Naive thymus-derived CD4-positive, alpha-beta T cell (primary cell): ENCODE measurements at regions of chr6 and their contacts with region 1.

Region 1: GRCh38 chr6:33417903-33418689 is at the start of gene CUTA:
- DNase-seq: peak; percentile 91 to 100 (median 99)
- ATAC-seq: peak; percentile 92
- H3K4me3 ChIP-seq: peak within 1 kb of the TSS; percentile 74
- H3K4me3 Mint-ChIP-seq: peak within 1 kb of the TSS; percentile 88 to 97 (median 94)
- H3K27ac ChIP-seq: peak within 1 kb of the TSS; percentile 94
- H3K27ac Mint-ChIP-seq: peak within 1 kb of the TSS; percentile 98 to 100 (median 99)
- H3K4me1 ChIP-seq: peaks cover 31 to 54% of the 10 kb centered on the region in 2 donors
- H3K4me1 Mint-ChIP-seq: peaks cover 60 to 89% (median 73%) of the 10 kb centered on the region in 7 donors
- H3K27me3 ChIP-seq: no peaks in the 10 kb centered on the region
- H3K27me3 Mint-ChIP-seq: no peaks in the 10 kb centered on the region
- total RNA-seq, gene CUTA: 148 to 235 (median 158) TPM

Region 2: GRCh38 chr6:32853541-32854375 is 564.3 kb before region 1 on chr6 and contains the starts of genes PSMB9 and TAP1:
- CTCF ChIA-PET with region 1: no interaction called
- POLR2A ChIA-PET with region 1: no interaction called
- intact Hi-C with region 1: loop called in 1 of 2 experiments (anchors 10 kb)
- DNase-seq: peak; percentile 92 to 97 (median 94)
- ATAC-seq: peak; percentile 92
- H3K4me3 ChIP-seq: peak within 1 kb of the TSS; percentile 91
- H3K4me3 Mint-ChIP-seq: peak within 1 kb of the TSS; percentile 96 to 100 (median 100)
- H3K27ac ChIP-seq: peak within 1 kb of the TSS; percentile 100
- H3K27ac Mint-ChIP-seq: peak within 1 kb of the TSS; percentile 97 to 100 (median 100)
- H3K4me1 ChIP-seq: peaks cover 45 to 57% of the 10 kb centered on the region in 2 donors
- H3K4me1 Mint-ChIP-seq: peaks cover 61 to 80% (median 72%) of the 10 kb centered on the region in 7 donors
- H3K27me3 ChIP-seq: no peaks in the 10 kb centered on the region
- H3K27me3 Mint-ChIP-seq: no peaks in the 10 kb centered on the region
- total RNA-seq, gene PSMB9: 70.3 to 452 (median 90.5) TPM
- total RNA-seq, gene TAP1: 92.1 to 500 (median 103) TPM

Region 3: DNA sequence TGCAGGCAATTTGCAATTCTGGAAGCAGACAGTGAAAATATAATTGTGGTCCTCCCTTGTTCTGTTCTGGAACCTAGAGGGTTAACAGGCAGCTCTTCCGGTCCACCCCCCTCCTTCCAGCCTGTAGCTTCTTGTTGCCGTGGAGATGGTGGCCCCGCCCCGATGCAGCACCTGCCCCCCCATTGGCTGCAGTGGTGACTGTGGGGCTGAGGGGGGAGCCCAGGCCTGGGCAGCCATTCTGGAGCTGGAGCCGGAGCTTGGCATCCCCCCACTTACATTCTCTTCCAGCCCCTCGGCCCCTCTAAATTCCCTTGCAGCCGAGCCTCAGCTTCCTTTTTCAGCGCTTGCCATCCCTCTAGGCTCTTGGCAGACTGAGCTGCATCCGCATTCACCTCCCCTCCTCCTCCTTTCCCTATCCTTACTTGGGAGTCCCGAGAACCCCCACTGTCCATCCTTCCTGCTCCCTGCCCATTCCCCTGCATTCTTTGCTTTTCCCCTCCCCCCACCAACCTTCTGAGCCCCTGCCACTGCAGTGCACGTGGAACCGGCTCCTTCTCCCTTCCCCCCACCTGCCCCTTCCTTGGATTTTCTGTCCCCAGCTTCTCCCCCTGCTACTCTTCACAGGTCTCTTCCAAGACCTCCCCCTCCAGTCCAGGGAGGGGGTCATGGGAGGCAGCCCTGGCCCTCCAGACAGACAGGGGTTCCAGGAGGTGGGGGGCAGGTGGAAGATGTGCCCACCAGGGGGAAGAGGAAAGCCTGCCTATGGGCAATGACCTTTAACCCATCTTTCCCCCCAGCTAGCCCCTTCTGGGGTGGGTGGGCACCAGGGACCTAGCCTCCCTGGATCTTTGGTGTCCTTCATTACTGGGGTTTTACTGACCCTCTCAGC is 13.1 kb after region 1 on chr6:
- CTCF ChIA-PET with region 1: interaction called, 7 read pairs
- POLR2A ChIA-PET with region 1: interaction called, 61 read pairs
- intact Hi-C with region 1: loop called (anchors 1 kb)
- DNase-seq: peak; percentile 65 to 89 (median 87)
- ATAC-seq: peak; percentile 82
- H3K4me3 ChIP-seq: peak overlapping the region; percentile 52
- H3K4me3 Mint-ChIP-seq: peak overlapping the region; percentile 86 to 98 (median 92)
- H3K27ac ChIP-seq: peak overlapping the region; percentile 88
- H3K27ac Mint-ChIP-seq: peak overlapping the region; percentile 81 to 98 (median 96)
- H3K4me1 ChIP-seq: peaks cover 42 to 51% of the 10 kb centered on the region in 2 donors
- H3K4me1 Mint-ChIP-seq: peaks cover 56 to 69% (median 64%) of the 10 kb centered on the region in 7 donors
- H3K27me3 ChIP-seq: no peaks in the 10 kb centered on the region
- H3K27me3 Mint-ChIP-seq: no peaks in the 10 kb centered on the region

Region 4: DNA sequence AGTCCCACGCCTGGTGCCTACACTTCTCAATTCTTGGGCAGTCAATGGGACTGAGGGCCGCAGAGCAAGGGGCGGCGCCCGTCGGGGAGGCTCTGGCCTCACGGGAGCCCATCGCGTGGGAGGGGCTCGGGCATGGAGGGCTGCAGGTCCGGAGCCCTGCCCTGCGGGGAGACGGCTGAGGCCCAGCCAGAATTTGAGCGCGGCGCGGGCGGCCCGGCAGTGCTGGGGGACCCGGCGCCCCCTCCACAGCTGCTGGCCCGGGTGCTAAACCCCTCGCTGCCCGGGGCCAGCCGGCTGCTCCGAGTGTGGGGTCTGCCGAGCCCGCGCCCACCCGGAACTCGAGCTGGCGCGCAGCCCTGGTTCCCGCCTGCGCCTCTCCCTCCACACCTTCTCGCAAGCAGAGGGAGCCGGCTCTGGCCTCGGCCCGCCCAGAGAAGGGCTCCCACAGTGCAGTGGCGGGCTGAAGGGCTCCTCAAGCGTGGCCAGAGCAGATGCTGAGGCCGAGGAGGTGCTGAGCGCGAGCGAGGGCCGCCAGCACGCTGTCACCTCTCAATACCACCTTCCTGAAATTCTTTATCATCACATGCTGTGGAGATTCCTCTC is 103.5 kb after region 1 on chr6:
- CTCF ChIA-PET with region 1: no interaction called
- POLR2A ChIA-PET with region 1: no interaction called
- intact Hi-C with region 1: no loop called
- DNase-seq: no peak
- ATAC-seq: no peak
- H3K4me3 ChIP-seq: no peak overlapping the region
- H3K4me3 Mint-ChIP-seq: no peak overlapping the region
- H3K27ac ChIP-seq: no peak overlapping the region
- H3K27ac Mint-ChIP-seq: no peak overlapping the region
- H3K4me1 ChIP-seq: no peaks in the 10 kb centered on the region
- H3K4me1 Mint-ChIP-seq: peaks cover 0 to 3% (median 0%) of the 10 kb centered on the region in 7 donors
- H3K27me3 ChIP-seq: no peaks in the 10 kb centered on the region
- H3K27me3 Mint-ChIP-seq: peaks cover 0 to 2% (median 0%) of the 10 kb centered on the region in 5 donors

Region 5: GRCh38 chr6:34760108-34760507 is 1342.0 kb after region 1 on chr6:
- CTCF ChIA-PET with region 1: no interaction called
- POLR2A ChIA-PET with region 1: no interaction called
- intact Hi-C with region 1: no loop called
- DNase-seq: no peak
- ATAC-seq: no peak
- H3K4me3 ChIP-seq: no peak overlapping the region
- H3K4me3 Mint-ChIP-seq: peak overlapping the region in 1 of 10 donors; percentile 36
- H3K27ac ChIP-seq: no peak overlapping the region
- H3K27ac Mint-ChIP-seq: peak overlapping the region in 1 of 9 donors; percentile 21
- H3K4me1 ChIP-seq: peaks cover 7 to 12% of the 10 kb centered on the region in 2 donors
- H3K4me1 Mint-ChIP-seq: peaks cover 3 to 27% (median 14%) of the 10 kb centered on the region in 7 donors
- H3K27me3 ChIP-seq: no peaks in the 10 kb centered on the region
- H3K27me3 Mint-ChIP-seq: no peaks in the 10 kb centered on the region

Region 6: GRCh38 chr6:35080812-35081425 is 1662.8 kb after region 1 on chr6:
- CTCF ChIA-PET with region 1: no interaction called
- POLR2A ChIA-PET with region 1: no interaction called
- intact Hi-C with region 1: no loop called
- DNase-seq: no peak
- ATAC-seq: peak; percentile 5
- H3K4me3 ChIP-seq: no peak overlapping the region
- H3K4me3 Mint-ChIP-seq: no peak overlapping the region
- H3K27ac ChIP-seq: no peak overlapping the region
- H3K27ac Mint-ChIP-seq: peak overlapping the region in 1 of 9 donors; percentile 54
- H3K4me1 ChIP-seq: no peaks in the 10 kb centered on the region
- H3K4me1 Mint-ChIP-seq: peaks cover 0 to 4% (median 0%) of the 10 kb centered on the region in 7 donors
- H3K27me3 ChIP-seq: no peaks in the 10 kb centered on the region
- H3K27me3 Mint-ChIP-seq: no peaks in the 10 kb centered on the region